ENCODE measurements at regions of chr17 and their contacts with region 1.

Region 1: GRCh38 chr17:35655303-35655702 is 68.2 kb downstream of the AP2B1 start:
- DNase-seq: no peak
- ATAC-seq: no peak
- H3K4me3 ChIP-seq: no peak overlapping the region
- H3K27ac ChIP-seq: no peak overlapping the region
- H3K4me1 ChIP-seq: no peaks in the 10 kb centered on the region
- H3K27me3 ChIP-seq: no peaks in the 10 kb centered on the region
- CTCF ChIP-seq: no peak

Region 2: DNA sequence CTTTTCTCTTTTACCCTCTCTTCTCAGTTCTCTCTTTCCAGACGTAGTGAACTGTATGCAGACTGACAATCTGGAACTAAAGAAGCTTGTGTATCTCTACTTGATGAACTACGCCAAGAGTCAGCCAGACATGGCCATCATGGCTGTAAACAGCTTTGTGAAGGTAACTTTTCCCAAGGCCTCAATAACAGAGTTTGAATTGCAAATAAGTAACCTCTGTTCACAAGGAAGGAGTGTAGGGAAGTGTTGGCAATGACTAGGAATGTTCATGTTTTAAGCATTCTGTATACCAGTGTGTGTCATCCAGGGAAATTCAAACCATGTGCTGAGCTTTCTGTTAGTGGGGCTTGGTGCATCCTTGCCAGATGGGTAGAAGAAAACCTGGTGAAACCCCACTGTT is 49.6 kb before region 1 on chr17:
- intact Hi-C with region 1: loop called in 1 of 10 experiments (anchors 5 kb)
- DNase-seq: no peak
- ATAC-seq: no peak
- H3K4me3 ChIP-seq: no peak overlapping the region
- H3K27ac ChIP-seq: no peak overlapping the region
- H3K4me1 ChIP-seq: peaks cover 0 to 7% (median 0%) of the 10 kb centered on the region in 9 donors
- H3K27me3 ChIP-seq: no peaks in the 10 kb centered on the region
- CTCF ChIP-seq: no peak

Region 3: DNA sequence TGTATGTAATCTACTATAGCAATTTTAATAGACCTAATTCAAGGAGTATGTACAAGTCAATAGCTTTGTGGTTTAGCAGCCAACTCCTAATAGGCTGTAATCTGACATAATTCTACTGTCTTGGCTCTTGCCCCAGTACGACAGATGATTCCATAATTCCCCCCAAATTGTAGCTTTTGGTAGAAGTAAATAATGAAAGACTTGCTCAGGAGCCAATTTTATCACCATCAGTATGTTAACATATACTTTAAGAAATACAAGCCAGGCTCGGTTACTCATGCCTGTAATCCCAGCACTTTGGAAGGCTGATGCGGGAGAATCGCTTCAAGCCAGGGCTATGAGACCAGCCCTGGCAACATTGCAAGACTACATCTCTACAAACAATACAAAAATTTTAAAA is 14.3 kb before region 1 on chr17:
- intact Hi-C with region 1: no loop called
- DNase-seq: no peak
- ATAC-seq: no peak
- H3K4me3 ChIP-seq: no peak overlapping the region
- H3K27ac ChIP-seq: no peak overlapping the region
- H3K4me1 ChIP-seq: no peaks in the 10 kb centered on the region
- H3K27me3 ChIP-seq: no peaks in the 10 kb centered on the region
- CTCF ChIP-seq: no peak